ENCODE measurements at regions of chr10 and their contacts with region 1.

Region 1: DNA sequence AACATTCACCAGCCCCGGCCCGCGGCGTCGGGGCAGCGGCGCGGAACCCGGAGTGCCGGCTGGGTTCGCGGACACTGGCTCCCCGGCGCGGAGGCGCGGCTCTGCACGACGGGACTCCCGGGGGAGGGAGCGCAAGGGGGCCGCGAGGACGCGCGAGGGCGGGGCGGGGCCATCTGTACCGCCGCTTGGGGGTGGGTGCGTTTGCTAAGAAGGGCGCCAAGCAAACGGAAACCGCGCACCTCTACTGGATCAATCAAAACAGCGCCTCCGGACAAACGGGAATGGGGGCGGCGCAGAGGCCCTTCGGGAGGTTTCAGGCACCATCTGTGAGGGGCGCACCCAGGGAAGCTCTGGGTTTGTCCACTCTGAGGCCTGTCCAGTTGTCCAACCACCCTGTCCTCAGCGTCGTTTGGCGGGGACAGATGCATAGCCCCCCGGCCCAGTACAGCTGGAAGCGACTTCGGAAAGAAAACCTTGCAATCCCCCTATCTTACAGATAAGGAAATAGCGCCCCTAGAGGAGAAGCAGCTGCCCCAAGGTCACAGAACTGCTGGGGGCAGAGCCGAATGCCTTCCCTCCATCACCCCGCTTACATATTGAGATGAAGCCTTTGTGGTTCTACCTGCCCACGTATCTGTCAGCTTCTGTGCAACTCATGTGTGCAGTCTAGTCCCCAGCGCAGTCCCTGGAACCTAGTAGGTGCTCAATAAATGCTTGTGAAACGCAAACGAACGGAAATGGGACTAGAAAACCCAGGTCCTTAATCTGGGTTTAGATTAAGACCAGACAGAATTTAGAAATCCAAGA is 10.7 kb upstream of the SLIT1 start:
- DNase-seq: peak; percentile 92
- H3K4me3 ChIP-seq: peak overlapping the region; percentile 70
- H3K27ac ChIP-seq: peak overlapping the region; percentile 35
- H3K4me1 ChIP-seq: peaks cover 51% of the 10 kb centered on the region
- CTCF ChIP-seq: peak; percentile 87

Region 2: DNA sequence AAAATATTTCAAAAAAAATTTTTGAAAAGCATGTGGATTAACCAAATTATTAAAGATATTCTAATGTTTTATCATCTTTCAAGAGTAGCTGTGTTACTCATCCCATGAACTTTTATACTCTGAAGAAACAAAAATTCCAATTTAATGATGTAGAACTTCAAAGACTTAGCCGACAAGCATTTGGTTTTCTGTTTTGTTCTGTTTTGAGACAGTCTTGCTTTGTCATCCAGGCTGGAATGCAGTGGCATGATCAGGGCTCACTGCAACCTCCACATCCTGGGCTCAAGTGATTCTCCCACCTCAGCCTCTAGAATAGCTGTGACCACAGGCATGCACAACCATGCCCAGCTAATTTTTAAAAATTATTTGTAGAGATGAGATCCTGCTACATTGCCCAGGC is 382.2 kb before region 1 on chr10:
- CTCF ChIA-PET with region 1: no interaction called
- POLR2A ChIA-PET with region 1: no interaction called
- intact Hi-C with region 1: no loop called
- DNase-seq: no peak
- H3K4me3 ChIP-seq: no peak overlapping the region
- H3K27ac ChIP-seq: no peak overlapping the region
- H3K4me1 ChIP-seq: no peaks in the 10 kb centered on the region
- CTCF ChIP-seq: no peak

Region 3: GRCh38 chr10:96949039-96949683 is 247.3 kb before region 1 on chr10:
- CTCF ChIA-PET with region 1: no interaction called
- POLR2A ChIA-PET with region 1: no interaction called
- intact Hi-C with region 1: no loop called
- DNase-seq: no peak
- H3K4me3 ChIP-seq: no peak overlapping the region
- H3K27ac ChIP-seq: no peak overlapping the region
- H3K4me1 ChIP-seq: no peaks in the 10 kb centered on the region
- CTCF ChIP-seq: no peak

Region 4: GRCh38 chr10:97217299-97217698 is 20.9 kb after region 1 on chr10:
- CTCF ChIA-PET with region 1: interaction called, 3 read pairs
- POLR2A ChIA-PET with region 1: interaction called, 11 read pairs
- intact Hi-C with region 1: no loop called
- DNase-seq: no peak
- H3K4me3 ChIP-seq: no peak overlapping the region
- H3K27ac ChIP-seq: no peak overlapping the region
- H3K4me1 ChIP-seq: peaks cover 4% of the 10 kb centered on the region
- CTCF ChIP-seq: no peak

Measured in OCI-LY7 (cell line).